Natural killer cell (primary cell): ENCODE measurements at regions of chr3 and their contacts with region 1.

Region 1: GRCh38 chr3:123328851-123329635 is 119.8 kb downstream of the ADCY5 start:
- DNase-seq: peak; percentile 72 to 81
- ATAC-seq: peak; percentile 71 to 91 (median 88)
- H3K4me3 ChIP-seq: no peak overlapping the region
- H3K4me3 Mint-ChIP-seq: no peak overlapping the region
- H3K27ac ChIP-seq: no peak overlapping the region
- H3K27ac Mint-ChIP-seq: no peak overlapping the region
- H3K4me1 ChIP-seq: no peaks in the 10 kb centered on the region
- H3K4me1 Mint-ChIP-seq: no peaks in the 10 kb centered on the region
- H3K27me3 ChIP-seq: peaks cover 4% of the 10 kb centered on the region
- H3K27me3 Mint-ChIP-seq: peaks cover 0 to 3% of the 10 kb centered on the region in 2 donors
- CTCF ChIP-seq: peak; percentile 88

Region 2: GRCh38 chr3:122739172-122739571 is 589.9 kb before region 1 on chr3:
- intact Hi-C with region 1: no loop called
- DNase-seq: no peak
- ATAC-seq: no peak
- H3K4me3 ChIP-seq: no peak overlapping the region
- H3K4me3 Mint-ChIP-seq: no peak overlapping the region
- H3K27ac ChIP-seq: no peak overlapping the region
- H3K27ac Mint-ChIP-seq: no peak overlapping the region
- H3K4me1 ChIP-seq: no peaks in the 10 kb centered on the region
- H3K4me1 Mint-ChIP-seq: peaks cover 0 to 4% of the 10 kb centered on the region in 2 donors
- H3K27me3 ChIP-seq: no peaks in the 10 kb centered on the region
- H3K27me3 Mint-ChIP-seq: no peaks in the 10 kb centered on the region
- CTCF ChIP-seq: no peak

Region 3: GRCh38 chr3:123489400-123490004 is 160.5 kb after region 1 on chr3:
- intact Hi-C with region 1: loop called (anchors 5 kb)
- DNase-seq: peak; percentile 36 to 57
- ATAC-seq: peak in 2 of 3 donors; percentile 57 to 67
- H3K4me3 ChIP-seq: no peak overlapping the region
- H3K4me3 Mint-ChIP-seq: no peak overlapping the region
- H3K27ac ChIP-seq: no peak overlapping the region
- H3K27ac Mint-ChIP-seq: no peak overlapping the region
- H3K4me1 ChIP-seq: no peaks in the 10 kb centered on the region
- H3K4me1 Mint-ChIP-seq: peaks cover 13 to 27% of the 10 kb centered on the region in 2 donors
- H3K27me3 ChIP-seq: no peaks in the 10 kb centered on the region
- H3K27me3 Mint-ChIP-seq: peaks cover 0 to 5% of the 10 kb centered on the region in 2 donors
- CTCF ChIP-seq: peak; percentile 66

Region 4: DNA sequence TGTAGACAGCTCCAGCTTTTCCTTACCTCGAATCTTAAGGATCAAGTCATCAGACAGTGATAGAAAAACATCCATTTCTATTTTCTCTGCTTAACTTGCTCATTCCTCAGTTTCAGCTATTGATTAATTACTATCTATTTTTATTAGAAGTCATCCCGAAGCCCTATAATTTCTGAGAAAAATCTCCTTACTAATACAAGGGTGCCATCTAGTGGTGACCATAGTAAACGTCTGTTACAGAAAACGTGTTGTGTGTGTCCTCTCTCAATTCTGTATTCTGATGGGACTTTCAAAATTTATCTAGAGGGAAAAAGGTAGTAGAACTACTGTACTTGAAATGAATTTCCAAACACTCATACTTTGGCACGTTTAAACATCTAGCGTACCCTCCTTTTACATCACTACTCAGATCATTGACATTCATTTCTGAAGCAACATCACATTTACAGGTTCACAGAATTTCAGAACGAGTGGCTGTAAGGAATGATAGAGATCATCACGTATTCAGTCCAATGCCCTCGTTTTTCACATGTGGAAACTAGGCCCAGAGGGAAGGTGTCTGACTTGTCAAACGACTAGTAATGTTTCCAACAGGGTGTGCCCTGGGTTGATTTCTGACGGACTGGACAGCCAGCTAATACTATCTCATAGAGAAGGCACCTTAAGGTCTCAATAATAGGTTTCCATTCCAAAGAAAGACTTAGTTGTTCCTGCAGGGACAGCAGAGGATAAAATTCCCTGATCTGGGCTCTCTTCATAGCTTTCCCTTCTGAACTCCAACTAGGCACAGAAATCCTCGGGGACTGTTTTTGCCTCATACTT is 230.2 kb after region 1 on chr3:
- intact Hi-C with region 1: loop called (anchors 1 kb)
- DNase-seq: peak in 1 of 2 donors; percentile 79
- ATAC-seq: peak; percentile 42 to 60 (median 52)
- H3K4me3 ChIP-seq: no peak overlapping the region
- H3K4me3 Mint-ChIP-seq: no peak overlapping the region
- H3K27ac ChIP-seq: no peak overlapping the region
- H3K27ac Mint-ChIP-seq: no peak overlapping the region
- H3K4me1 ChIP-seq: no peaks in the 10 kb centered on the region
- H3K4me1 Mint-ChIP-seq: peaks cover 5 to 18% of the 10 kb centered on the region in 2 donors
- H3K27me3 ChIP-seq: no peaks in the 10 kb centered on the region
- H3K27me3 Mint-ChIP-seq: no peaks in the 10 kb centered on the region
- CTCF ChIP-seq: peak; percentile 95